Activated CD4-positive, alpha-beta T cell treated with anti-CD3 and anti-CD28 coated beads, Interleukin-2, amount 10 ng/mL, durations not matched to agents 24 days and 14 days (primary cell): ENCODE measurements at regions of chr6 and their contacts with region 1.

Region 1: GRCh38 chr6:130620338-130620781 is 206.8 kb upstream of the SMLR1 start:
- DNase-seq: no peak
- H3K4me3 Mint-ChIP-seq: no peak overlapping the region
- H3K27ac Mint-ChIP-seq: no peak overlapping the region
- H3K4me1 Mint-ChIP-seq: peaks cover 15% of the 10 kb centered on the region
- H3K27me3 Mint-ChIP-seq: no peaks in the 10 kb centered on the region

Region 2: GRCh38 chr6:130494729-130495128 is 125.6 kb before region 1 on chr6:
- intact Hi-C with region 1: no loop called
- DNase-seq: no peak
- H3K4me3 Mint-ChIP-seq: no peak overlapping the region
- H3K27ac Mint-ChIP-seq: no peak overlapping the region
- H3K4me1 Mint-ChIP-seq: peaks cover 6% of the 10 kb centered on the region
- H3K27me3 Mint-ChIP-seq: peaks cover 4% of the 10 kb centered on the region

Region 3: GRCh38 chr6:130575971-130576370 is 44.4 kb before region 1 on chr6:
- intact Hi-C with region 1: loop called (anchors 2 kb)
- DNase-seq: peak; percentile 93
- H3K4me3 Mint-ChIP-seq: peak overlapping the region; percentile 75
- H3K27ac Mint-ChIP-seq: peak overlapping the region; percentile 74
- H3K4me1 Mint-ChIP-seq: peaks cover 41% of the 10 kb centered on the region
- H3K27me3 Mint-ChIP-seq: no peaks in the 10 kb centered on the region

Region 4: GRCh38 chr6:130602151-130602770 is 18.1 kb before region 1 on chr6:
- intact Hi-C with region 1: loop called (anchors 1 kb)
- DNase-seq: peak; percentile 65
- H3K4me3 Mint-ChIP-seq: peak overlapping the region; percentile 16
- H3K27ac Mint-ChIP-seq: peak overlapping the region; percentile 50
- H3K4me1 Mint-ChIP-seq: peaks cover 29% of the 10 kb centered on the region
- H3K27me3 Mint-ChIP-seq: peaks cover 2% of the 10 kb centered on the region